BJ (cell line): ENCODE measurements at regions of chr18 and their contacts with region 1.

Region 1: GRCh38 chr18:45839414-45840395 is 14.2 kb downstream of the SIGLEC15 start:
- DNase-seq: no peak
- H3K4me3 ChIP-seq: no peak overlapping the region
- H3K27me3 ChIP-seq: peaks cover 4% of the 10 kb centered on the region
- CTCF ChIP-seq: peak; percentile 83

Region 2: DNA sequence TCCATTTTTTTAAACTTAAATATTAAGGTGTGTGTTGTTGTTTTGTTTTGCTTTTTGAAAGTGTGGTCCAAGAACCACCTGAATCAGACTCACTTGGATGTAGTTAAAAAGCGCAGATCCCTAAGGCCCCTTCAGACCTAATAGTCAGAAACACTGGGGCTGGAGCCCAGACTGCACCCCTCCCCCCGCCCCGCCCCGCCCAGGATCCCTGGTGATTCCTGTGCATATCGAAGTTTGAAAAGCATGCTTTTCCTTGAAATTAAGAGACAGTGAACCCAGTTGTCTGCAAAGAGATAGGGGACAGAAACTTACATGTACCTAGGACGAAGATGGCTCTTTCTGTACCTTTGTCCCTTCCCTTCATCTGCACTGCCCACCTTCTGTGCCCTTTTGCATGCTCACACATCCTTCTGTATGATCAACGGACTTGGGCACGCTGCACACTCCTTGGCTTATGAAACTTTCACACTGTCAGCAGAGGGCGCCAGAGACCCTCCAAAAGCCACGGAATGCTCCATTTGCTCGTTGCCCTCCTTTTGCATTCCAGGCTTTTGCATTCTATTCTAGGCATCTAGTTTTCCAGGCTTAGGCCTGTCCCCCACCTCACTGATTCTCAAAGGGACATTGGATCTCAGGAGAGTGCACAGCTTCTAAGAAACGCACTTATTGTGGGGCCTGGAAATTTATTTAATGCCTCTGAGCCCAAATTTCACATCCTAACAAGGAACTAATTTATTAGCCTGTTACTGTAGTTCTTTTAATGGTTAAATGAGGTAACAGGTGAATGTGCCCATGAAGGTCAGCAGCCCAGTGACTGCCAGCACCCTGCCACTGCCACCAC is 148.5 kb before region 1 on chr18:
- CTCF ChIA-PET with region 1: interaction called, 46 read pairs
- POLR2A ChIA-PET with region 1: no interaction called
- DNase-seq: no peak
- H3K4me3 ChIP-seq: no peak overlapping the region
- H3K27me3 ChIP-seq: no peaks in the 10 kb centered on the region
- CTCF ChIP-seq: peak; percentile 85

Region 3: DNA sequence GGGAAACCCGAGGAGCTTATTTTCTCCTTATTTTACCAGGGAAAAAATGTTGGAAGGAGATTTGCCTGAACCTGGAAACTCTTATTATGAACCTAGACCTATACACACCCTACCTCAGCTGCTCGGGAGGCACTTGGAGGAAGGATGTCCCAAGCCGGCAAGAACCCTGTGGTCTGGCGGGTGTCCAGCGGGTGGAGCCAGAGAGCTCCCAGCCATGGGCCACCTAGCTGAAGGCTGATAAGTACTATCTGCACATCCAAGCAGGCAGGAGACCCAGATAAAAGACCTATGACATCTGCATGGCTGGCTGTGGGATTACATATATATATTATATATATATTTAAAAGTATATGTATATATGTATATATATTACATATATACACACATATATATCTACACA is 116.8 kb before region 1 on chr18:
- CTCF ChIA-PET with region 1: interaction called, 39 read pairs
- POLR2A ChIA-PET with region 1: no interaction called
- DNase-seq: no peak
- H3K4me3 ChIP-seq: no peak overlapping the region
- H3K27me3 ChIP-seq: 0 out of 2 replicates have a peak, but pooled peaks cover 2% of the 10 kb centered on the region
- CTCF ChIP-seq: peak; percentile 87

Region 4: GRCh38 chr18:45786649-45787340 is 52.9 kb before region 1 on chr18:
- CTCF ChIA-PET with region 1: interaction called, 12 read pairs
- POLR2A ChIA-PET with region 1: no interaction called
- DNase-seq: no peak
- H3K4me3 ChIP-seq: no peak overlapping the region
- H3K27me3 ChIP-seq: no peaks in the 10 kb centered on the region
- CTCF ChIP-seq: no peak

Region 5: DNA sequence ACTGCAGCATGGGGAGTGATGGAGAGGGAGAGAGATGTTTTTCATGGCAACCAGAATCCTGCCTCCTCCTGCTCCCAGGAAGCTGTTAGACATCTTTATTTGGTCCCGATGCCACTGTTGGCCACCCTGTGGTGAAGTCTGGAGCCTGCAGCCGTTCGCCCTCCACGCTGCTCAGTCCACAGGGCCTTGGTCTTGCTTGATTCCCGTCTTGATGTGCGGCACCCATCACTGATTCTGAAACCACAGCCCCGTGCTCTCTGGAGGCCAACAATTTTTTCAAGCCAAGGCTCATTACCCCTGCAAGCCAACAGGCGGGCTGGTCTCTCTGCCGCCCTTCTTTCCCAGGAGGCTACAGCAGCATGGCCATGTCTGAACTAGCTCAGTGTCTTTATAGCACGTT is 10.3 kb after region 1 on chr18:
- CTCF ChIA-PET with region 1: interaction called, 10 read pairs
- POLR2A ChIA-PET with region 1: no interaction called
- DNase-seq: no peak
- H3K4me3 ChIP-seq: no peak overlapping the region
- H3K27me3 ChIP-seq: no peaks in the 10 kb centered on the region
- CTCF ChIP-seq: peak; percentile 40